Stomach (tissue), 19 donors: ENCODE measurements at regions of chr5 and their contacts with region 1.

Region 1: DNA sequence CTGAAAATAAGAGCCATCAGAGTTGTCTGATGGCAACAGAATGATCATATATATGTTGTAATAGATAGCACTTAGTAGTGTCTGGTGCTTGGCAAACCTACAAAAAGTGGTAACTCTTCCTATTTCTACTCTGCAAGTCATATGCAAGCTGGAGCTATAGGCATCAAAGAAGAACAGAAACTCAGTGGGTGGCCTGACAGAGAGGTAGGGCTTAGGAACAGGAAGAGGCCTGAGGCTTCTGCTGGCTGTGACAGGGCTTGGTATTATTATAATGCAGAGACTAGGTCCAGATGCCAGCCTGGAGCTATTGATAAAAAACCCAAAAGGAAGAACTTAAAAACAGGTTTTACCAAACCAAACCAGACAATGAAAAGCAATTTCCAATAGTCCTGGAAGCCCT is 4.4 kb upstream of the DIAPH1 start:
- DNase-seq: no peak
- H3K4me3 ChIP-seq: no peak overlapping the region
- H3K27ac ChIP-seq: peak overlapping the region in 1 of 5 donors; percentile 16
- H3K4me1 ChIP-seq: peaks cover 3 to 8% (median 7%) of the 10 kb centered on the region in 4 donors
- H3K27me3 ChIP-seq: no peaks in the 10 kb centered on the region
- CTCF ChIP-seq: no peak
- EP300 ChIP-seq: no peak
- POLR2A ChIP-seq: no peak

Region 2: GRCh38 chr5:141001854-141002604 is 621.2 kb before region 1 on chr5:
- intact Hi-C with region 1: no loop called
- DNase-seq: peak; percentile 27 to 69
- H3K4me3 ChIP-seq: peak overlapping the region; percentile 23 to 30 (median 26)
- H3K27ac ChIP-seq: peak overlapping the region in 3 of 5 donors; percentile 26 to 49 (median 45)
- H3K4me1 ChIP-seq: peaks cover 0 to 15% (median 12%) of the 10 kb centered on the region in 4 donors
- H3K27me3 ChIP-seq: peaks cover 0 to 6% (median 0%) of the 10 kb centered on the region in 3 donors
- CTCF ChIP-seq: no peak
- EP300 ChIP-seq: no peak
- POLR2A ChIP-seq: no peak

Region 3: GRCh38 chr5:141585594-141585993 is 37.6 kb before region 1 on chr5:
- intact Hi-C with region 1: loop called (anchors 5 kb)
- DNase-seq: no peak
- H3K4me3 ChIP-seq: no peak overlapping the region
- H3K27ac ChIP-seq: no peak overlapping the region
- H3K4me1 ChIP-seq: peaks cover 0 to 12% (median 2%) of the 10 kb centered on the region in 4 donors
- H3K27me3 ChIP-seq: no peaks in the 10 kb centered on the region
- CTCF ChIP-seq: no peak
- EP300 ChIP-seq: no peak
- POLR2A ChIP-seq: no peak

Region 4: GRCh38 chr5:141800617-141801016 is 177.4 kb after region 1 on chr5:
- intact Hi-C with region 1: no loop called
- DNase-seq: peak in 1 of 2 donors; percentile 53
- H3K4me3 ChIP-seq: no peak overlapping the region
- H3K27ac ChIP-seq: no peak overlapping the region
- H3K4me1 ChIP-seq: peaks cover 0 to 4% (median 0%) of the 10 kb centered on the region in 4 donors
- H3K27me3 ChIP-seq: peaks cover 0 to 39% (median 0%) of the 10 kb centered on the region in 3 donors
- CTCF ChIP-seq: no peak
- EP300 ChIP-seq: no peak
- POLR2A ChIP-seq: no peak